Right cardiac atrium (tissue), 5 donors: ENCODE measurements at regions of chr16 and their contacts with region 1.

Region 1: GRCh38 chr16:83010776-83011720 is 384.3 kb downstream of the CDH13 start:
- DNase-seq: no peak
- ATAC-seq: no peak
- H3K4me3 ChIP-seq: no peak overlapping the region
- H3K27ac ChIP-seq: no peak overlapping the region
- H3K4me1 ChIP-seq: no peaks in the 10 kb centered on the region
- H3K27me3 ChIP-seq: no peaks in the 10 kb centered on the region

Region 2: GRCh38 chr16:82954224-82954929 is 56.7 kb before region 1 on chr16:
- intact Hi-C with region 1: loop called in 1 of 4 experiments (anchors 10 kb)
- DNase-seq: no peak
- ATAC-seq: no peak
- H3K4me3 ChIP-seq: no peak overlapping the region
- H3K27ac ChIP-seq: no peak overlapping the region
- H3K4me1 ChIP-seq: no peaks in the 10 kb centered on the region
- H3K27me3 ChIP-seq: no peaks in the 10 kb centered on the region